WTC11 (cell line): ENCODE measurements at regions of chr1 and their contacts with region 1.

Region 1: GRCh38 chr1:204213668-204214662 is at the start of gene GOLT1A:
- DNase-seq: peak; percentile 93
- ATAC-seq: peak; percentile 96
- H3K4me3 Mint-ChIP-seq: peak within 1 kb of the TSS; percentile 69
- H3K27ac Mint-ChIP-seq: peak within 1 kb of the TSS; percentile 93
- H3K4me1 Mint-ChIP-seq: peaks cover 6% of the 10 kb centered on the region
- H3K27me3 Mint-ChIP-seq: no peaks in the 10 kb centered on the region
- CTCF ChIP-seq: peak; percentile 47; the same call in 1 of the 2 replicates
- total RNA-seq, gene GOLT1A: 6.5 to 6.7 TPM (median 6.6 TPM) in 3 replicates

Region 2: GRCh38 chr1:204065174-204065985 is 148.6 kb before region 1 on chr1:
- CTCF ChIA-PET with region 1: no interaction called
- POLR2A ChIA-PET with region 1: no interaction called
- DNase-seq: peak; percentile 37
- ATAC-seq: peak; percentile 86
- H3K4me3 Mint-ChIP-seq: peak overlapping the region; percentile 44
- H3K27ac Mint-ChIP-seq: peak overlapping the region; percentile 96
- H3K4me1 Mint-ChIP-seq: peaks cover 51% of the 10 kb centered on the region
- H3K27me3 Mint-ChIP-seq: no peaks in the 10 kb centered on the region; the same call in 1 of the 2 replicates
- CTCF ChIP-seq: no peak

Region 3: DNA sequence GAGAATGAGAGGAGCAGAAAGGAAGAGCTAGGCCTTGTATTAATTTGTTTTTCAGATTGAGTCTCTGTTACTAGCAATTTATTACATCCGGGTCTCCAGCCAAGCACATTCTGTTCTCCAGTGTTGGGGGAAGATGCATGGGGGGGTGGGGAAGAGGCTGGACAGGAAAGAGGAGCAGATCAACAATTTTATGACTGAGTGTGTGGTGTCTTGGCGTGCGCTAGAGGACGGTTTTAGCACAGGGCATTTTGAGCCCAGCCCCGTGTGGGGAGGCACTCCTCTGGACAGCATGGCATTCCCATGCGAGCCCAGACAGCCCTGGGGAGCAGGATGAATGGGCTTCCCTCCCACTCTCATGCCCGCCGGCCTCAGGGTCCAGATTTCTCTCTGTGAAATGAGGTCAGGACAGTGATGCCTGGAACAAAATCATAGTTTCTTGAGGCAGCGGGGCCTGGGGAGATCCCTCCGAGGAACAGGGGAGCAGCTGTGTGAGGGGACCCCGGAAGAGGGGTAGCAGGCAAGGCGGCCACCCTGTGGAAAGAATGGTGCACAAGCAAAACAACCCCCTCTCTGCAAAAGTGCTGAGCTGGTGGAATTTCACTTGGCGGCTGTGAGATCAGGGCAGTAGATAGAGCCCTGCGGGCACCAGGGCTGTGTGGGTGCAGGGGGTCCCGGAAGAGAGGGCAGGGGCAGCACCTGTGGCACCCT is 124.8 kb before region 1 on chr1:
- CTCF ChIA-PET with region 1: no interaction called
- POLR2A ChIA-PET with region 1: no interaction called
- DNase-seq: no peak
- ATAC-seq: no peak
- H3K4me3 Mint-ChIP-seq: no peak overlapping the region
- H3K27ac Mint-ChIP-seq: peak overlapping the region; percentile 90
- H3K4me1 Mint-ChIP-seq: peaks cover 97% of the 10 kb centered on the region
- H3K27me3 Mint-ChIP-seq: no peaks in the 10 kb centered on the region
- CTCF ChIP-seq: no peak

Region 4: GRCh38 chr1:204151552-204152309 is 62.2 kb before region 1 on chr1 and contains the start of gene ETNK2:
- CTCF ChIA-PET with region 1: interaction called, 15 read pairs
- POLR2A ChIA-PET with region 1: no interaction called
- DNase-seq: peak; percentile 66
- ATAC-seq: peak; percentile 29
- H3K4me3 Mint-ChIP-seq: peak within 1 kb of the TSS; percentile 73
- H3K27ac Mint-ChIP-seq: no peak within 1 kb of the TSS
- H3K4me1 Mint-ChIP-seq: peaks cover 39% of the 10 kb centered on the region
- H3K27me3 Mint-ChIP-seq: peaks cover 29% of the 10 kb centered on the region
- CTCF ChIP-seq: no peak
- total RNA-seq, gene ETNK2: 18.3 to 20.2 TPM (median 19.7 TPM) in 3 replicates

Region 5: DNA sequence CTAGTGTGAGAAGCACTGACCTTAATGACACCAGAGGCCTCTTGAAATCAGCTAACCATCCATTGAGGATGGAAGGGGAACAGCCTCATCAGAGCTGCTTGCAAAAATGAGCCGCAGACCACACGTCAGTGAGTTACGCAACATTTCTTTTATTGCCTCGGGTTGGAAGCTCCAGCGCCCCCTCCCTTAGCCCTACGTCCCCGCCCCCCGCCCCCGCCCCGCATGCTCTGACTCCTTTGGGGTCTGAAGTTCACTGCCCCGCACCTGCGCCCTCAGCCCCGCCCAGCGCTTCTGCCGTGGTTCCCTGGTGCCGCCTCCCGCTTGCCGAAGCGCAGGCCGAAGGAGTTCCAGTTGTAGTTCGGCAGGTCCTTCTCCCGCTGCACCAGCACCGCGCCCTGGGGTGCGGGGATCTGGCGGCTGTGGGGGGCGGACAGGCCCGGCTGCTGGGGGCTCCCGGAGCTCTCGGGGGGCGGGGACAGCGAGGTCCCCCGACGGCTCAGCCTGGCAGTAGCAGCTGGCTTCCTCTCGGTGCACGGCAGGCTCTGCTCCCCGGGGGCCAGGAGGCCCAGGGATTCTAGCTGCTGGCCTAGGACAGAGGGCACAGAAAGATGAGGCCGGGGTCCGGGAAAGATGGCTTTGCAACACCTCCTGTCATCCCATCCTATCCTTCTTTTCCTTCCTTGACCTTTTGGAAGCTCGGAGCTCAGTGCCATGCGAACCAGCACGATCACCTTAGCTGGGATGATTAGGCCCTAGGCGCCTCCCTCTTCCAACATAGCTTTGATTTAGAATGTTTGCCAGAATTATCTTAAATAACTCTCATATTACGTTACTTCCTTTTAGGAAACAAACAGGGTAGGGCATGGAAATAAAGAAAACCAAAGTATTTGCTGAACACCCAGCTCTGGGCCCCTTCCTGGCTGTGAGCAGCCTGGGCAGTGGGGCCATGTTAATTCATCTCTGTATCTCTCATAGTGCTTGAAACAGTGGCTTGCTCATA is 23.5 kb before region 1 on chr1:
- CTCF ChIA-PET with region 1: interaction called, 22 read pairs
- POLR2A ChIA-PET with region 1: no interaction called
- DNase-seq: peak; percentile 75
- ATAC-seq: peak; percentile 78
- H3K4me3 Mint-ChIP-seq: peak overlapping the region; percentile 61
- H3K27ac Mint-ChIP-seq: no peak overlapping the region
- H3K4me1 Mint-ChIP-seq: peaks cover 8% of the 10 kb centered on the region
- H3K27me3 Mint-ChIP-seq: peaks cover 66% of the 10 kb centered on the region
- CTCF ChIP-seq: no peak

Region 6: DNA sequence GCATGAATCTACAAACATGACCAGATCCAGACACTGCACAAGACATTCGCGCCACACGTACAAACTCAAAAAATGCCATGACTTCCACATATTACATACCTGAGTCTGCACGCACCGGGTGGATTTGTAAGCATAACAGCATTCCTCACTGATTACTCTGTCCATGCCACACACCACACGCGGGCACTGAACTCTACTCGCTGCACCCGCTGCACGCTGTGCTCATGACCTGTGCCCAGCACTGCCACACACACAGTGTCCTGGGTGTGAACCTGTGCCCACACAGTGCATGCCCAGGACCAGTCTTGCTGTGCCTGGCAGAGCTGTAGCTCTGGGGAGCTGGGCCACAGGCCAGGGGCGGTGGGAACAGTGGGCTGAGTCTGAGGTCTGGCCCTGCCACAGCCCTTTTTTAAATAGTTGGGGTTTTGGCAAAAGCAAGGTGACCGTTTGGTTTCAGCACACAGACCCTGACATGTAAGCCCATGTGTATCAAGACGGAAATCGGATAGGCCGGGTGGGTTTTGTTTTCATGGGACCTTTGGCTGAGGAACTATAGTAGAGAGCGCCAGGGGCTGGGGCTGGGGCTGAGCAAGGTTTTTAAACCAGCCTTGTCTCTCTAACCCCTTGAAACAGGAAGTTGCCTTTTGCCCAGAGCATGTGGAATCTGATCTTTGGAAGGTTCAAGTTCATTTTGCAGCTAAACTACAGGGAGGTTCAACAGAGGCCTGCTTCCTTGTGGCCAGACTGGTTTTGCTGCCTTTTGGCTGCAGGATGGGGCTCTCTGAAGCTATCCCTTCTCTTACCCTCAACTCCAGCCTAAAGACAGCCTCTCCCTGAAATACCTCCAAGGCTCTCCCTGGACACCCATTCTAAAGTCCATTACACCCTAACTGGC is 12.1 kb after region 1 on chr1:
- CTCF ChIA-PET with region 1: interaction called, 10 read pairs
- POLR2A ChIA-PET with region 1: interaction called, 3 read pairs
- DNase-seq: no peak
- ATAC-seq: peak; percentile 57
- H3K4me3 Mint-ChIP-seq: no peak overlapping the region
- H3K27ac Mint-ChIP-seq: peak overlapping the region; percentile 24; the same call in 1 of the 2 replicates
- H3K4me1 Mint-ChIP-seq: peaks cover 7% of the 10 kb centered on the region
- H3K27me3 Mint-ChIP-seq: no peaks in the 10 kb centered on the region
- CTCF ChIP-seq: no peak

Region 7: DNA sequence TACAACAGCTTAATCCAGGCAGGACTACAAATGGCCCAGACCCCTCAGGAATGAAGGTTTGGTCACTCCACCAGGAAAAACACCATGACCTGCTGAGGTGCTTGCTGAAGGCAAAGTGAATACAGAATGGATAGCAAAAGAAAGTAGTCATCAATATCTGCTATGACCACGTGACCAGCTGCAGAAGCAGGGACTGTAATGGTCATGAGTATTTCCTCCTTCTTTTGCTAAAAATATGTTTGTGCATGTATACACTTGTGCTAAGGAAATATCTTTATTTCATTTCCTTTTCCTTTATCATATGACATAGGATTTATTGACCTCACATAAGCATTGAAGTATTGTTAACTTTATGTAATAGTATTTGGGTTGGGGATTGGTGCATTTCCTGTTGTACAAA is 26.3 kb after region 1 on chr1:
- CTCF ChIA-PET with region 1: no interaction called
- POLR2A ChIA-PET with region 1: no interaction called
- DNase-seq: no peak
- ATAC-seq: no peak
- H3K4me3 Mint-ChIP-seq: no peak overlapping the region
- H3K27ac Mint-ChIP-seq: no peak overlapping the region
- H3K4me1 Mint-ChIP-seq: no peaks in the 10 kb centered on the region
- H3K27me3 Mint-ChIP-seq: no peaks in the 10 kb centered on the region
- CTCF ChIP-seq: no peak

Region 8: DNA sequence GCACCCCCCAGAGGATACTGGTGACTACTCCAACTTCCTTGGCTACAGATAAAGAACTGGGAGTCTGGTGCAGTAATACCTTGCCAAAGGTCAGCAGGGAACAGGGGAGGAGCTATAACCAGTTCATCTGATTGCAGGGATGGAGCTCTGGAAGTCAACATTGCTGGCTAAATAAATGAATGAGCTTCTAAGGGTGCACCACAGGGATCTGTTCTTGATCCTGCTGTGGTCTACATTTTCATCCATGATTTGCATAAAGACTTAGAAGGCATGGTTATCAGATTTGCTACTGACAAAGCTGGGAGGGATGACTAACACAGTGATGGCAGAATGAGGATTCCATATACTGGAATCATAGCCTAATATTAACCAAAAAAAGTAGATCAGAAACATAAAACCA is 127.4 kb after region 1 on chr1:
- CTCF ChIA-PET with region 1: interaction called, 11 read pairs
- POLR2A ChIA-PET with region 1: no interaction called
- DNase-seq: no peak
- ATAC-seq: no peak
- H3K4me3 Mint-ChIP-seq: no peak overlapping the region
- H3K27ac Mint-ChIP-seq: no peak overlapping the region
- H3K4me1 Mint-ChIP-seq: peaks cover 66% of the 10 kb centered on the region
- H3K27me3 Mint-ChIP-seq: peaks cover 12% of the 10 kb centered on the region
- CTCF ChIP-seq: no peak

Region 9: GRCh38 chr1:204363335-204364124 is 149.6 kb after region 1 on chr1:
- CTCF ChIA-PET with region 1: interaction called, 118 read pairs
- POLR2A ChIA-PET with region 1: no interaction called
- DNase-seq: peak; percentile 73
- ATAC-seq: peak; percentile 43
- H3K4me3 Mint-ChIP-seq: peak overlapping the region; percentile 56
- H3K27ac Mint-ChIP-seq: no peak overlapping the region
- H3K4me1 Mint-ChIP-seq: peaks cover 19% of the 10 kb centered on the region
- H3K27me3 Mint-ChIP-seq: peaks cover 20% of the 10 kb centered on the region
- CTCF ChIP-seq: peak; percentile 98

Region 10: DNA sequence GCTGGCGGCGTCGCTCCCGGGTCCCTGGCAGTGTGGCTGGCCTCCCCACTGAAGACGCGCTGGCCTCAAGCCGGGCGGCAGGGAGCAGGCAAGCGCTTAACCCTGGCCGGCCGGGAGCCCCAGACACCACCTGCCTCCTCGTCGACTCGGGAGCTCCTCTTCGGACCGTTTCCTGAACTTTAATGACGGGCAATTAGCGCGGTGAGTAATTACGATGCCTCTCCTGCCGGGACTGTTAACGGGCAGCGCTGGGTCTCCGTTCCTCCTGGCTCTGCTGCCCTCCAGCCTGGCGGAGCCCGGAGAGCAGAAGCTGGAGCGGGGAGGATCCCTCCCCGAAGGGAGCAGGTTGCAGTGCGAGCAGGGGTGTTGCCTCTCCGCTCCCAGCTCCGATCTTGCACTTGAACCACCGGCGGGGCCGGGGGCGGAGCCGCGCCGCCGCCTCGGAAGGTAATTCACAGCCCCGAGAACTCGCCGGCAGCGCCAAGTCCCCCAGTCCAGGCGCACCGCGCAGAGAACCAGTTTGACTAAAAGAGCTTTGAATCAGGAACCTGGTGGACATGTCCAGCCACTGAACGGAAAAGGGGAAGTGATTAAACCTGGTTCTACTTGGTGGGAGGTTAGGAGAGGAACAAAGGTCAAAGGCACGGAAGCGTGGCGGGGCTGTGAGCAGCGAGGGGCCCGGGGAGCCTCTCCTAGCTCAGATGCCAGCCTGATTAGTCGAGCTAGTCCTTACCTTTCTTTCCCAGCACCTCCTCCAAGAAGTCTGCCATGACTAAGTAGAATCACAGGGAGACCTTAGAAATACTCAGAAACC is 164.0 kb after region 1 on chr1:
- CTCF ChIA-PET with region 1: interaction called, 14 read pairs
- POLR2A ChIA-PET with region 1: no interaction called
- DNase-seq: peak; percentile 72
- ATAC-seq: peak; percentile 85
- H3K4me3 Mint-ChIP-seq: peak overlapping the region; percentile 85
- H3K27ac Mint-ChIP-seq: peak overlapping the region; percentile 82; the same call in 1 of the 2 replicates
- H3K4me1 Mint-ChIP-seq: peaks cover 9% of the 10 kb centered on the region
- H3K27me3 Mint-ChIP-seq: peaks cover 36% of the 10 kb centered on the region
- CTCF ChIP-seq: no peak